Heart left ventricle (tissue), 16 donors: ENCODE measurements at regions of chr7 and their contacts with region 1.

Region 1: GRCh38 chr7:99990460-99990852 is 14.6 kb upstream of the AZGP1 start:
- DNase-seq: no peak
- ATAC-seq: no peak
- H3K4me3 ChIP-seq: peak overlapping the region in 6 of 12 donors; percentile 6 to 40 (median 20)
- H3K27ac ChIP-seq: no peak overlapping the region
- H3K4me1 ChIP-seq: peaks cover 0 to 24% (median 3%) of the 10 kb centered on the region in 12 donors
- H3K27me3 ChIP-seq: peaks cover 0 to 4% (median 0%) of the 10 kb centered on the region in 9 donors
- CTCF ChIP-seq: no peak
- POLR2A ChIP-seq: no peak

Region 2: GRCh38 chr7:99910976-99911375 is 79.5 kb before region 1 on chr7:
- intact Hi-C with region 1: loop called in 9 of 10 experiments (anchors 1 to 5 kb)
- DNase-seq: no peak
- ATAC-seq: no peak
- H3K4me3 ChIP-seq: no peak overlapping the region
- H3K27ac ChIP-seq: no peak overlapping the region
- H3K4me1 ChIP-seq: peaks cover 0 to 18% (median 2%) of the 10 kb centered on the region in 12 donors
- H3K27me3 ChIP-seq: no peaks in the 10 kb centered on the region
- CTCF ChIP-seq: no peak
- POLR2A ChIP-seq: no peak

Region 3: DNA sequence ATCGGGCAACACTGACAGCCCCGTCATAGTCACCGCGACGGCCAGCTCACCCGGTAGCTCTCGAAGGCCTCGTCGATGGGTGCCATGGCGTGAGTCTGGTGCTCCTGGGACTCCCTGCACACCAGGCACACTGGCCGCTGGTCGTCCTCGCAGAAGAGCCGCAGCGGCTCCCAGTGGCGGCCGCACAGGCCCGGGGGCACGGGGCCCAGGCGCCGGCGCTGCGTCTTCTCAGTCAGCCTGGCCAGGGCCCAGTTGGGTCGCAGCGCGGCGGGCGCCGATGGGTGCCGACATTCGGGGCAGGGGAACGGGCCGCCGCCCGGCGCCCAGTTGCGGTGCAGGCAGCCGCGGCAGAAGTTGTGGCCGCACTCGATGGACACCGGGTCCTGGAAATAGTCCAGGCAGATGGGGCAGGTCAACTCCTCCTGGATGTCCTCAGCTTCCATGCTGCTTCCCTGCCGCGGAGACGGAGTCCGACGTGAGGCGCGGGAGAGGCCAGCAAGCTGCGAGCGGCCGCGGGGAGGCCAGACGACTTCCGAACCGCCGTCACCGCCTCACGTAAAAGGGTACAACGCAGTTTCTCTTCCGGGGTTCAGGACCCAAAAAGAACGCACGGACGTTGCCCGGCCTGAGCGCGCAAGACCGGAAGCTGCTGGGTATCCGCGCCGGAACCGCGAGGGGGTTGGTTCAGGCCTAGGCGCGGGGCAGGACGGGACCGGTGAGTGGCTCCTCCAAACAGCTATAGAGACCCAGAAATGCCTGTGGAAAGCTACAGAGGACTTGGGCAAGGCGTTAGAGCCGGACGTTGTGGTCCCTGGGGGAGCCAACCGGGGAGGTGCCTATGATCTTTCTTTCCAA is 71.3 kb before region 1 on chr7 and contains the start of gene TRIM4:
- intact Hi-C with region 1: loop called in 3 of 10 experiments (anchors 5 kb)
- DNase-seq: peak; percentile 92 to 95 (median 95)
- ATAC-seq: peak; percentile 99 to 100 (median 99)
- H3K4me3 ChIP-seq: peak within 1 kb of the TSS; percentile 57 to 97 (median 81)
- H3K27ac ChIP-seq: peak within 1 kb of the TSS; percentile 51 to 97 (median 92)
- H3K4me1 ChIP-seq: peaks cover 9 to 42% (median 31%) of the 10 kb centered on the region in 12 donors
- H3K27me3 ChIP-seq: no peaks in the 10 kb centered on the region
- CTCF ChIP-seq: peak in 5 of 12 donors; percentile 13 to 45 (median 41)
- POLR2A ChIP-seq: peak in 1 of 2 donors; percentile 88
- total RNA-seq, gene TRIM4: 4.7 to 13.5 (median 7.3) TPM

Region 4: GRCh38 chr7:99928994-99929729 is 61.3 kb before region 1 on chr7 and contains the start of gene GJC3:
- intact Hi-C with region 1: loop called in 7 of 10 experiments (anchors 1 to 5 kb)
- DNase-seq: peak; percentile 71 to 80 (median 75)
- ATAC-seq: peak; percentile 83 to 98 (median 97)
- H3K4me3 ChIP-seq: peak within 1 kb of the TSS in 11 of 12 donors; percentile 12 to 48 (median 39)
- H3K27ac ChIP-seq: peak within 1 kb of the TSS; percentile 37 to 79 (median 62)
- H3K4me1 ChIP-seq: peaks cover 0 to 15% (median 10%) of the 10 kb centered on the region in 12 donors
- H3K27me3 ChIP-seq: peaks cover 0 to 3% (median 0%) of the 10 kb centered on the region in 9 donors
- CTCF ChIP-seq: peak; percentile 23 to 71 (median 53)
- POLR2A ChIP-seq: peak in 1 of 2 donors; percentile 22
- total RNA-seq, gene GJC3: 0.54 TPM in 1 of 9 donors, not detected in the others

Region 5: DNA sequence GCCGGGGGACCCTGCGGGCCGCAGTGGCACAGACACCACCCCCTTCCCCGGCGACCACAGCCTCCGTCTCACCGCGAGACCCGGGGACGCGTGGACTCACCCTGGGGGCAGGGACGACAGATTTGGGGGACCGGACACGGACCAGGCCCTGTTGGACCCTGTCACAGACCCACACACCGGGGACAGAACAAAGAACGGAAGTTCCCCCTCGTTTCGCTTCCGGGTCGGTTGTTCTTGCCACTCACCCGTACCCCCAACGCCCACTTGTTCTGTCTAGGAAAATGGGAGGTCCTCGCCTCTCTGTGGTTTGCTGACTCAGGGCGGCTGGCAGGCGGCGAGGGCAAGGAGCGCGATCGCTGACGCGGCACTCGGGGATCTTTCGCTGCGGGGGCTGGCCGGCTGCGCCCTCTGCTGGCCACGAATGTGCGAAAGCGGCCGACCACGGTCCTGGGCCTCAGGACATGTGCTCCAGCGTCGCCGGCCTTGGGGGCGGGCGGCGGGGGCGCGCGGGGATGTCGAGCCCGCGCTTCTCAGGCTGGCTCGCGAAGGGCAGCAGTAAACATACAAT is 91.2 kb after region 1 on chr7 and contains the start of gene ZNF3:
- intact Hi-C with region 1: loop called in 6 of 10 experiments (anchors 2 to 5 kb)
- DNase-seq: peak; percentile 98 to 99 (median 99)
- ATAC-seq: peak; percentile 95 to 98 (median 96)
- H3K4me3 ChIP-seq: peak within 1 kb of the TSS; percentile 75 to 100 (median 88)
- H3K27ac ChIP-seq: peak within 1 kb of the TSS; percentile 77 to 95 (median 86)
- H3K4me1 ChIP-seq: peaks cover 0 to 48% (median 28%) of the 10 kb centered on the region in 12 donors
- H3K27me3 ChIP-seq: no peaks in the 10 kb centered on the region
- CTCF ChIP-seq: peak; percentile 91 to 99 (median 96)
- POLR2A ChIP-seq: peak; percentile 5 to 64
- total RNA-seq, gene ZNF3: 11.7 to 21.2 (median 15.2) TPM

Region 6: DNA sequence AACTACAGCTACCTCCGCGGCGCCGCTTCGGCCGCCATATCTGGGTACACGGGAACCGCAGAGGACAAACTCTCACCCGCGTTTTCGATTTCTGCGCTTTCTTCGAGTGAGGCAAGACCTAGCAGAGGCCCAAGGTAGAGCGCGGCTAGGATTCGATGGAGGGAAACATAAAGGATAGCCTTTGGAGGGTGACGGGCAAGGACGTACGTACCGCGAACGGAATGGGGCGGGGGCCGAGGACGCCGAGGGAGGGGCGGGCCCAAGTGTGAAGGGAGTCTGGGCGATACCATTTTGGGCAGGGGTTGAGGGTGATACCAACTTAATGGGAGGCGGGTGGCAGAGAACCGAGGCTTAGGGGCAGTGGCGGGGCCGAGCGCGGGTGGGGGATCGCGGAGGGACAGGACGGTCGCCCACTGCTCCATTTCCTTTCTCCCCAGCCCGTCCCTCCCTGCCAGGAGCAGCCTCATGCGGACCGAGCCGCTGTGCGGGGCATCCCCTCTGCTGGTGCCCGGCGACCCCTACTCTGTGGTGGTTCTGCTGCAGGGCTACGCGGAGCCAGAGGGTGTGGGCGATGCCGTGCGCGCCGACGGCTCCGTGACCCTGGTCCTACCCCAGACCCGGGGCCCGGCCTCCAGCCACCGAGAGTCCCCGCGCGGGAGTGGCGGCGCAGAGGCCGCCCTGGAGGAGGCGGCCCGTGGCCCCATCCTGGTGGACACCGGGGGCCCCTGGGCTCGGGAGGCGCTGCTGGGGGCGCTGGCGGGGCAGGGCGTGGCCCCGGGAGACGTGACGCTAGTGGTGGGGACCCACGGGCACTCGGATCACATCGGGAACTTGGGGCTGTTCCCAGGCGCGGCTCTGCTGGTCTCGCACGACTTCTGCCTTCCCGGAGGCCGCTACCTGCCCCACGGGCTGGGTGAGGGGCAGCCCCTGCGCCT is 136.7 kb after region 1 on chr7 and contains the start of gene MBLAC1:
- intact Hi-C with region 1: loop called in 9 of 10 experiments (anchors 5 kb)
- DNase-seq: peak; percentile 90 to 93 (median 91)
- ATAC-seq: peak; percentile 91 to 95 (median 94)
- H3K4me3 ChIP-seq: peak within 1 kb of the TSS; percentile 74 to 99 (median 94)
- H3K27ac ChIP-seq: peak within 1 kb of the TSS; percentile 88 to 99 (median 97)
- H3K4me1 ChIP-seq: peaks cover 0 to 41% (median 18%) of the 10 kb centered on the region in 12 donors
- H3K27me3 ChIP-seq: no peaks in the 10 kb centered on the region
- CTCF ChIP-seq: no peak
- POLR2A ChIP-seq: peak in 1 of 2 donors; percentile 28
- total RNA-seq, gene MBLAC1: 1.3 to 2.7 (median 2.0) TPM

Region 7: GRCh38 chr7:100132697-100133151 is 142.3 kb after region 1 on chr7:
- intact Hi-C with region 1: loop called in 9 of 10 experiments (anchors 5 kb)
- DNase-seq: peak in 2 of 5 donors; percentile 51 to 52
- ATAC-seq: peak; percentile 78 to 83 (median 80)
- H3K4me3 ChIP-seq: no peak overlapping the region
- H3K27ac ChIP-seq: no peak overlapping the region
- H3K4me1 ChIP-seq: peaks cover 0 to 16% (median 7%) of the 10 kb centered on the region in 12 donors
- H3K27me3 ChIP-seq: no peaks in the 10 kb centered on the region
- CTCF ChIP-seq: peak; percentile 55 to 83 (median 75)
- POLR2A ChIP-seq: no peak